Posterior cingulate gyrus (tissue), 11 donors: ENCODE measurements at regions of chr11 and their contacts with region 1.

Region 1: DNA sequence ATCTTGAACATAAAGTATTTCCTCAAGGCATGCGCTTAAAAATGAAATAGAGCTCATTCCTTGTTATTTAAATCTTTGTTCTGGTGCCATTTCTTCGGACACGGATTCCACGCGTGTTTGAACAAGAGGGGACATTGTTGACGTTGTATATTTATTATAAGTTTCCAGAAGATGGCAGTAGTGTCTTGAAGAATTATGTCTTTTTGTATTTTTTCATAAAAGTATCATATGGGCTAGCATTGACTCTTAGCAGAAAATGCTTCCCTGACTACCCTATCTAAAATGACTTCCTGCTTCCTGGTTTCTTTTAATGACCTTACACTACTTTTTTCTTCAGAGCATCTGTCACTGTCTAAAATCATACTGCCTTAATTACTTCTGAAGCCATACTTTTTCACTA is 20.4 kb downstream of the BIRC2 start:
- DNase-seq: no peak

Region 2: GRCh38 chr11:101940901-101941520 is 426.4 kb before region 1 on chr11:
- intact Hi-C with region 1: no loop called
- DNase-seq: no peak

Region 3: GRCh38 chr11:102109896-102110760 is 257.2 kb before region 1 on chr11 and contains the start of gene YAP1:
- intact Hi-C with region 1: no loop called
- DNase-seq: peak; percentile 22 to 93 (median 60)

Region 4: GRCh38 chr11:102269927-102270326 is 97.4 kb before region 1 on chr11:
- intact Hi-C with region 1: no loop called
- DNase-seq: no peak

Region 5: DNA sequence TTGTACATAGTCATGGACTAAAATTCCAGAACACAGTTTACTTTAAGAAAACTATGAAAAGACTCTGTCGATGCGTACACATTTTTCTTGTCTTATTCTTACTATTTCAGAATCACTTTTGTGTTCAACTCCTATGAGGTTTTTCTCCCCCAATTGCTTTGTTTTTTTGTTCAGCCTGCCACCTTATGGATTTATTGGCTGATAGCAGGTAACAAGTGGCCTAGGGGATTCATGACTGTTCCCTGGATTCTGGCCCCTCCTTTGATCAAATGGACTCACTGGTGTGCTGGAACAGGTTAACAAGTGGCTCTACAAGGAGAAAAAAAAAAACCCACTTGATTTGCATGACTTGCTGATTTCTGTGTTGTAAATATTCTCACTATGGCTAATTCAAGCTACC is 247.1 kb after region 1 on chr11:
- intact Hi-C with region 1: loop called (anchors 5 kb)
- DNase-seq: no peak